A673 (cell line): ENCODE measurements at regions of chr2 and their contacts with region 1.

Region 1: DNA sequence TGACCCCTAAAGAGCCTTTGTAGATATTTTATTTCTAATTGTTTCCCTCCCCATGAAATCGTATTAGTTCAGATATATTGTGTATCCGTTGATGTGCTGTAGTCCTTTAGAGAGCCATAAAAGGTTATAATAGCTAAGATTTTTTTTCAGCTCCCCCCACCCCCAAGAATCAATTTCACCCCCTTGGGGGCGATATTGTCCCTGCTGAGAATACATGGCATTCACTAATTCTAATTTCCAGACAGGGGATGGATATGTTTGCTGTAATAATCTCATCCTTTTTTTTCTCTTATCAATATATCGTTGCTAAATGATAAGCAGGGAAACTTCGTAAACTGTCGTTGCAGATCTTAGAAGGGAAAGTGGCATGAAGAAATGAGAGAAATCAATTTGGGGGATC is 530.7 kb downstream of the TMEM182 start:
- DNase-seq: no peak
- H3K4me3 ChIP-seq: no peak overlapping the region
- H3K27ac ChIP-seq: no peak overlapping the region
- H3K4me1 ChIP-seq: no peaks in the 10 kb centered on the region
- H3K27me3 ChIP-seq: peaks cover 3% of the 10 kb centered on the region
- CTCF ChIP-seq: no peak

Region 2: DNA sequence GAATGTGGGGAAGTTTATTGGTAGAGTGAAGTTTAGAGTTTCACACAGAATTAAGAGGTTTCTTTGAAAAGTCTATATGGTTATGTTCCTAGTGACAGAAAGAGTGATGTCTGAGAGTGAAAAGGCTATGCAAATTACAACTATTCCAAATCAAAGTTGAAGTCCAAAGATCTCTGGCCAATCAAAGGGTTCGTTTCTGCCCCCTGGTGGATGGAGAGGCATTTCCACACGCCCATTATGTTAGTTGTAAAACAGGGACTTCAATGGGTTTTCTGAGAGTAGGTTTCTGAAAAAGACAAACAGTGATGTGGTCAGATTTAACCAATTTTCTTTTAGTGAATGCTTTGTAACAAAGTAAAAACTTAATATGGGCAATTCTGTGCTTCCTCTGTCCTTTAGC is 1119.8 kb after region 1 on chr2:
- CTCF ChIA-PET with region 1: no interaction called
- POLR2A ChIA-PET with region 1: no interaction called
- intact Hi-C with region 1: loop called (anchors 5 kb)
- DNase-seq: peak; percentile 44
- H3K4me3 ChIP-seq: no peak overlapping the region
- H3K27ac ChIP-seq: no peak overlapping the region
- H3K4me1 ChIP-seq: no peaks in the 10 kb centered on the region
- H3K27me3 ChIP-seq: no peaks in the 10 kb centered on the region
- CTCF ChIP-seq: peak; percentile 73